Ovary (tissue), 10 donors: ENCODE measurements at regions of chr1 and their contacts with region 1.

Region 1: GRCh38 chr1:155250633-155251449 is 4.4 kb downstream of the ENTREP3 start:
- DNase-seq: peak; percentile 87 to 94 (median 93)
- H3K4me3 ChIP-seq: no peak overlapping the region
- H3K27ac ChIP-seq: no peak overlapping the region
- H3K4me1 ChIP-seq: peaks cover 7% of the 10 kb centered on the region
- H3K27me3 ChIP-seq: no peaks in the 10 kb centered on the region
- CTCF ChIP-seq: peak; percentile 98 to 99 (median 98)
- EP300 ChIP-seq: no peak
- POLR2A ChIP-seq: no peak

Region 2: GRCh38 chr1:154386643-154387352 is 864.0 kb before region 1 on chr1:
- intact Hi-C with region 1: no loop called
- DNase-seq: peak in 1 of 5 donors; percentile 17
- H3K4me3 ChIP-seq: no peak overlapping the region
- H3K27ac ChIP-seq: no peak overlapping the region
- H3K4me1 ChIP-seq: no peaks in the 10 kb centered on the region
- H3K27me3 ChIP-seq: no peaks in the 10 kb centered on the region
- CTCF ChIP-seq: no peak
- EP300 ChIP-seq: no peak
- POLR2A ChIP-seq: no peak

Region 3: GRCh38 chr1:155591770-155592169 is 340.9 kb after region 1 on chr1:
- intact Hi-C with region 1: loop called in 1 of 4 experiments (anchors 5 kb)
- DNase-seq: no peak
- H3K4me3 ChIP-seq: no peak overlapping the region
- H3K27ac ChIP-seq: no peak overlapping the region
- H3K4me1 ChIP-seq: no peaks in the 10 kb centered on the region
- H3K27me3 ChIP-seq: no peaks in the 10 kb centered on the region
- CTCF ChIP-seq: peak; percentile 21 to 46 (median 34)
- EP300 ChIP-seq: no peak
- POLR2A ChIP-seq: no peak